ENCODE measurements at regions of chr1 and their contacts with region 1.

Region 1: DNA sequence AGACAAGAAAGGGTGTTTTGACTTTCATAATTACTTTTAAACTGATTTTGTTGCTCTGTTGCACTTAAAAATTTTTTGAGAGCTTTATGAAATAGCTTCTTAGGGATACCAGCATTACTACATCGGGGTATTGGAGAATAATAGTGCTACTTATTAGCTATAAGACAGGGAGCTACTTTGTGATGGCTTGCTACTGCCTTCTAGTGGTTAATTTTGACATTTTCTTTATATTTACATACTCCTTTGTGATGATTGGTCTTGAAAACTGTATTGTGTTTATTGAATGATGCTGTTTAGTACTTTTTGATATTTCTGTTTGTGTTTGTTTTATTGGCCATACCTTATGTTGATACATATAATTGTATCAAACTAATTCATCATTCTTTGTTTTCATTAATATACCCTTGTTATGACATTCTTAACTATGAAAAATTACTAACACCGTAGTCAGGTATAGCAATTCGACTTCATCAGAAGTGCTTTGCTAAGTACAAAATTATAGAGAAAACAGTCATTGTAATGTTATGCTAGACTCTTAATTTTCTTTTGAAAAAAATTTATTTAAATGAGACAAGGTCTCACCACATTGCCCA is 85.5 kb downstream of the CLIC4 start:
- DNase-seq: no peak
- ATAC-seq: peak; percentile 74
- H3K4me3 Mint-ChIP-seq: no peak overlapping the region
- H3K27ac Mint-ChIP-seq: no peak overlapping the region
- H3K4me1 Mint-ChIP-seq: peaks cover 46% of the 10 kb centered on the region
- H3K27me3 Mint-ChIP-seq: no peaks in the 10 kb centered on the region
- CTCF ChIP-seq: peak; percentile 51

Region 2: GRCh38 chr1:24694380-24694843 is 136.4 kb before region 1 on chr1:
- CTCF ChIA-PET with region 1: interaction called, 278 read pairs
- POLR2A ChIA-PET with region 1: interaction called, 3 read pairs
- intact Hi-C with region 1: loop called (anchors 2 kb)
- DNase-seq: no peak
- ATAC-seq: peak; percentile 53
- H3K4me3 Mint-ChIP-seq: peak overlapping the region; percentile 45
- H3K27ac Mint-ChIP-seq: peak overlapping the region; percentile 76
- H3K4me1 Mint-ChIP-seq: peaks cover 35% of the 10 kb centered on the region
- H3K27me3 Mint-ChIP-seq: no peaks in the 10 kb centered on the region
- CTCF ChIP-seq: no peak

Region 3: GRCh38 chr1:24735509-24736375 is 95.0 kb before region 1 on chr1:
- CTCF ChIA-PET with region 1: interaction called, 12 read pairs
- POLR2A ChIA-PET with region 1: interaction called, 5 read pairs
- intact Hi-C with region 1: no loop called
- DNase-seq: no peak
- ATAC-seq: no peak
- H3K4me3 Mint-ChIP-seq: peak overlapping the region; percentile 6
- H3K27ac Mint-ChIP-seq: peak overlapping the region; percentile 71
- H3K4me1 Mint-ChIP-seq: peaks cover 59% of the 10 kb centered on the region
- H3K27me3 Mint-ChIP-seq: no peaks in the 10 kb centered on the region
- CTCF ChIP-seq: no peak

Region 4: DNA sequence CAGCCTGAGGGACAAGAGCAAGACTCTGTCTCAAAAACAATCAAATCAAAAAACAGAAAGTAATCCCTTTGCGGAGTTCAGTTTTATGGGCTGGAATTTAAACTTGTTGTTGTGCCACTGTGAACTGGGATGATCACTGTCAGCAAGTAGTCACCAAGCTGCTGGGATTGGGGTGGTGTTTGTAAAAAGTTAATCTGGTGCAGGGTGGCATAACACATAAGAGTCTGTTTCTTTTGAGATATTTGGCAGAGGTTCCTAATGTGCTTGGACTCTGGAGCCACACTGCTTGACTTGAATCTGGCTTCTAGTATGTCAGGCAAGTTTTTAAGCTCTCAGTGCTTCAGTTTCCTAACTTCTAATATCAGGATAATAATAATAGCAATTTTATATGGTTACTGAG is 78.9 kb before region 1 on chr1:
- CTCF ChIA-PET with region 1: interaction called, 11 read pairs
- POLR2A ChIA-PET with region 1: interaction called, 6 read pairs
- intact Hi-C with region 1: loop called (anchors 2 kb)
- DNase-seq: no peak
- ATAC-seq: no peak
- H3K4me3 Mint-ChIP-seq: no peak overlapping the region
- H3K27ac Mint-ChIP-seq: no peak overlapping the region
- H3K4me1 Mint-ChIP-seq: peaks cover 77% of the 10 kb centered on the region
- H3K27me3 Mint-ChIP-seq: no peaks in the 10 kb centered on the region
- CTCF ChIP-seq: no peak

Region 5: GRCh38 chr1:24793447-24794131 is 37.2 kb before region 1 on chr1:
- CTCF ChIA-PET with region 1: interaction called, 3 read pairs
- POLR2A ChIA-PET with region 1: no interaction called
- intact Hi-C with region 1: loop called (anchors 5 kb)
- DNase-seq: no peak
- ATAC-seq: no peak
- H3K4me3 Mint-ChIP-seq: no peak overlapping the region
- H3K27ac Mint-ChIP-seq: peak overlapping the region; percentile 25
- H3K4me1 Mint-ChIP-seq: peaks cover 39% of the 10 kb centered on the region
- H3K27me3 Mint-ChIP-seq: no peaks in the 10 kb centered on the region
- CTCF ChIP-seq: no peak